Common myeloid progenitor, CD34-positive (primary cell): ENCODE measurements at regions of chr16 and their contacts with region 1.

Region 1: DNA sequence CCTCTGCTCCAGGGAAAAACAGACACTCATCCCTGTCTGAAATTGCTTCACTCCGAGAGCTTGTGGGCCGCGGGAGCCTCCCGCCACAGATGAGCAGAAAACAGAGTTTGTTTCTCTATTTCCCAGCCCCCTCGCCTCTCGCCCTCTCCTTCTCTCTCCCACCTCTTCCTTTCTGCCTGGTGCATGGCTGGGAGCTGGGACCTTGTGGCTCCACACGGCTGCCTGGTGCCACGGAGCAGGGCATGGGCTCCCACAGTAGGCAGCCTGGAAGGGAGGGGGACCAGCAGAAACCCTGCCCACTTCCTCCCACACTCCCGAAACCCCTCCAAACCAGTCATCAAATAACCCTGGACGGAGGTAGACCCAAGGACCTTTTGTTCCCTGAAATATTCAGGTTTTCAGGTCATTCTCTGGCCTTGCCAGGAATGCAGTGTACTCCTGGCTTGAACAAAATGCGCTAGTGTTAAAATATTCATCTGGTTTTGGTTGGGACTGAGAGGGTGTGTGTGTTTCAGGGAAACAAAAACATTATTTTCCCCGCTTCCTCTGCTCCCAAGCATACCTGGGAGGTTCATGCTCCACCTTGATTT is 204.9 kb downstream of the C16orf78 start:
- DNase-seq: no peak
- H3K4me3 ChIP-seq: no peak overlapping the region
- H3K27ac ChIP-seq: no peak overlapping the region
- H3K4me1 ChIP-seq: peaks cover 0 to 7% (median 0%) of the 10 kb centered on the region in 4 experiments
- H3K27me3 ChIP-seq: no peaks in the 10 kb centered on the region

Region 2: GRCh38 chr16:49556606-49557446 is 21.7 kb before region 1 on chr16:
- CTCF ChIA-PET with region 1: interaction called, 13 read pairs
- POLR2A ChIA-PET with region 1: no interaction called
- DNase-seq: peak; percentile 42 to 65 (median 65)
- H3K4me3 ChIP-seq: no peak overlapping the region
- H3K27ac ChIP-seq: no peak overlapping the region
- H3K4me1 ChIP-seq: peaks cover 0 to 10% (median 6%) of the 10 kb centered on the region in 4 experiments
- H3K27me3 ChIP-seq: no peaks in the 10 kb centered on the region